HCT116 (cell line): ENCODE measurements at regions of chr20 and their contacts with region 1.

Region 1: DNA sequence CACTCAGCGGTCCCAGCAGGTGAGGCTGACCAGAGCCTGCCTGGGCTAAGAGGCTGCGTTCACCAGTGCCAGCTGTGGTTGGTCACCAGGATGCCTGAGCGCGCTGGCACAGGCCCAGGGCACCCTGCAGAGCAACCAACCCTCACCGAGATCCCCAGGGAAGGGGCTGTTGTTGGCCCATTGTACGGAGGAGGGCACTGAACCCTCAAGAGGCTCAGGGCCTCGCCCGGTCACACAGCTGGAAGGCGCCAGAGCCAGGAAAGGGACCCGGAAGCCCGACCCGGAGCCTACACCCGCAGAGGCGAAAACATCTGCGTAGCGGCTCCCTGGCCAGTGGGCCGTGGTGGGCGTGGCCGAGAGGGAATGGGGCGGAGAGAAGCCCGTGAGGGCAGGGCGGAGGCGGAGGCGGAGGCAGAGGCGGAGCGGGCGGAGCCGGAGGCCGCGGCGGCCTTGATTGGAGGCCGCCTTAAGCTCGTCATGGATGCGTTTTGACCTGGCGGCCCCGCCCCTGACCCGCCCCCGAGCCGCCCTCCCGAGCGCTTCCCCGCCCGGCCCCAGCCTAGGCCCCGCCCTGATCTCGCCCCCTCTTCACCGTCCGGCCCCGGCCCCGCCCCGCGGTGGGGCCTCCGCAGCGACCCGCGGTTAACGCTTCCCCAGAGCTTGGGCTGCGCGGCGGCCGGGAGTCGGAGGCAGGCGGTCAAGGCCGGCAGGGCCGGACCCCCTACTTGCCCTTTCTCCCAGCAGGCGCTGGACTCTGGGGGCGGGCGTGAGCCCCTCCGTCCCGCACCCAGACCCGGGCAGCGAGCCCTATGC is 2.2 kb upstream of the MRGBP start:
- DNase-seq: peak; percentile 93
- ATAC-seq: peak; percentile 79
- H3K4me3 ChIP-seq: peak overlapping the region; percentile 64 to 72
- H3K27ac ChIP-seq: peak overlapping the region; percentile 99
- H3K4me1 ChIP-seq: peaks cover 23 to 67% of the 10 kb centered on the region in 2 experiments
- H3K27me3 ChIP-seq: no peaks in the 10 kb centered on the region
- CTCF ChIP-seq: no peak
- POLR2A ChIP-seq: no peak
- RAD21 ChIP-seq: no peak

Region 2: GRCh38 chr20:62409931-62410745 is 384.0 kb before region 1 on chr20:
- CTCF ChIA-PET with region 1: interaction called, 10 read pairs
- POLR2A ChIA-PET with region 1: no interaction called
- RAD21 ChIA-PET with region 1: no interaction called
- intact Hi-C with region 1: no loop called
- DNase-seq: no peak
- ATAC-seq: peak; percentile 28
- H3K4me3 ChIP-seq: peak overlapping the region; percentile 7 to 41; a peak in 3 of 4 replicates
- H3K27ac ChIP-seq: peak overlapping the region; percentile 30; the same call in 1 of the 2 replicates
- H3K4me1 ChIP-seq: peaks cover 29 to 40% of the 10 kb centered on the region in 2 experiments
- H3K27me3 ChIP-seq: no peaks in the 10 kb centered on the region
- CTCF ChIP-seq: peak; percentile 78 to 95 (median 79)
- POLR2A ChIP-seq: no peak
- RAD21 ChIP-seq: peak; percentile 94

Region 3: DNA sequence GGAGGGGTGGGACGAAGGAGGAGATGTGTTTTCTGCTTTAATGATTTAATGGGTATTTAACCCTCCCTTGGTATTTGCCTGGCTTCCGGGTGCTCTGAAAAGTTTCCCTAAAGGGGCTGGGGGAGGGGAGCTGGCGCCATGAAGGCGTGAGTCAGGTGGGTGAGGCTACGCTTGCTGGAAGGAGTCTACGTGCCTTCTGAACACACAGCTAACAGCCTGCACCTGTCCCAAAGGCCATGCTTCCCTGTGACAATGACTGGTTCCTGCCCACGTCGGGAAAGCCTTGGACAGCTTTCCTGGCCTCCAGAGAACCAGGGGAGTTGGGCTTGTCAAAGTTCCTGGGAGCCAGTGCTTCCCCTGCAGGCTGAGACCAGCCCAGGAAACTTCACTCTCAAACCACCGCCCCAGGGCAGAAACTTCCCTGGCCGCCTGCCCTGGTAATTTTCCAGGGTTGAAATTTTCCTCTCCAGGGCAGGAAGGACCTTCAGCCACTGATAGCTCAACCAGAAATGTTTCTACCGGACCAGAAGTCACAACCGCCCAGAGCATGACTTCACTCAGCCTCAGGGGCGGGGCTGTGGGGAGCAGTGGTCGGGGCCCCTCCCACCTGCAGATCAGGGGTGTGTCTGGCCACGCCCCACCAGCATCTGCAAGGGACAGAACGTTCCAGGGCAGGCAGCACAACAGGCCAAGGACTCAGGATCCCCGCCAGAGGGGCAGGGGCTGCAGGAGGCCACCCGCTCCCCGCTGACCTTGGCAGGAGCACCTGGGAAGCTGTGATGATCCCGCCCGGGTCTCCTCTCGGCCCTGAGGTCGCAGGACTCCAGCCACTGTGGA is 170.4 kb before region 1 on chr20:
- CTCF ChIA-PET with region 1: interaction called, 9 read pairs
- POLR2A ChIA-PET with region 1: interaction called, 4 read pairs
- RAD21 ChIA-PET with region 1: no interaction called
- intact Hi-C with region 1: loop called (anchors 1 kb)
- DNase-seq: peak; percentile 73
- ATAC-seq: peak; percentile 89
- H3K4me3 ChIP-seq: peak overlapping the region; percentile 39 to 50
- H3K27ac ChIP-seq: peak overlapping the region; percentile 100
- H3K4me1 ChIP-seq: peaks cover 46 to 57% of the 10 kb centered on the region in 2 experiments
- H3K27me3 ChIP-seq: no peaks in the 10 kb centered on the region
- CTCF ChIP-seq: no peak
- POLR2A ChIP-seq: peak; percentile 30
- RAD21 ChIP-seq: no peak

Region 4: DNA sequence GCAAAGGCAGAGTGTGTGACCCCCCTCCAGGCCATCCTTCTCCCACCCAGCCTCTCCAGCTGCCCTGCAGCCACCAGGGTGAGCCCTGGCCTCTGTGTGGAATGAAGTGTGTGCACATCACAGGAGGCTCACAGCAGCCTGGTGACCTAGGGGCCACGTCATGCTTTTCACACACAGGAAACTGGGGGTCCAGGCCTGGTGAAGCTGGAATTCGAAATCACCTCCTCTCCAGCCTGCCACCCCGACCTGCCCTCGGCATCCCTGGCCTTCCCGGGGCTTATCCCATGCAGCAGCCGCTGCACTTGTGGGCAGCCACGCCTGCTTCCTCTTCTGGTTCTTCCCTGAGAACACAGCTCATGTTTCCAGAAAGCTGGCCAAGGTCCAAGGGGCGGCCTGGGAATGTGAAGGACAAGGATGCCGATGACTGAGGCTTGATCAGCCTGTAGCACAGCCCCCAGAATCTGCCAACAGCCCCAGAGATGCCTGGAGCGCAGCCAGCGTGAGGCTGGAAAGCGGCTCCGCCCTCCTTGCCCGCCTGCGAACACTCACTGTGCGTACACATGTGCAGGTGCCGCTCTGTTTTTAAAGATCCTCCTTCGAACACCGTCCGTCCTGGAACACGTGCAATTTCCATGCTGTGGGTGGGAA is 89.7 kb before region 1 on chr20:
- CTCF ChIA-PET with region 1: interaction called, 3 read pairs
- POLR2A ChIA-PET with region 1: no interaction called
- RAD21 ChIA-PET with region 1: interaction called in 1 of 2 experiments, 4 read pairs
- intact Hi-C with region 1: loop called (anchors 1 kb)
- DNase-seq: peak; percentile 91
- ATAC-seq: peak; percentile 26
- H3K4me3 ChIP-seq: peak overlapping the region; percentile 28 to 36
- H3K27ac ChIP-seq: peak overlapping the region; percentile 91
- H3K4me1 ChIP-seq: peaks cover 52 to 72% of the 10 kb centered on the region in 2 experiments
- H3K27me3 ChIP-seq: no peaks in the 10 kb centered on the region
- CTCF ChIP-seq: 0 out of 6 replicates have a peak, but pooled peaks of 1 of the 3 experiments have one; percentile 5
- POLR2A ChIP-seq: no peak
- RAD21 ChIP-seq: no peak

Region 5: DNA sequence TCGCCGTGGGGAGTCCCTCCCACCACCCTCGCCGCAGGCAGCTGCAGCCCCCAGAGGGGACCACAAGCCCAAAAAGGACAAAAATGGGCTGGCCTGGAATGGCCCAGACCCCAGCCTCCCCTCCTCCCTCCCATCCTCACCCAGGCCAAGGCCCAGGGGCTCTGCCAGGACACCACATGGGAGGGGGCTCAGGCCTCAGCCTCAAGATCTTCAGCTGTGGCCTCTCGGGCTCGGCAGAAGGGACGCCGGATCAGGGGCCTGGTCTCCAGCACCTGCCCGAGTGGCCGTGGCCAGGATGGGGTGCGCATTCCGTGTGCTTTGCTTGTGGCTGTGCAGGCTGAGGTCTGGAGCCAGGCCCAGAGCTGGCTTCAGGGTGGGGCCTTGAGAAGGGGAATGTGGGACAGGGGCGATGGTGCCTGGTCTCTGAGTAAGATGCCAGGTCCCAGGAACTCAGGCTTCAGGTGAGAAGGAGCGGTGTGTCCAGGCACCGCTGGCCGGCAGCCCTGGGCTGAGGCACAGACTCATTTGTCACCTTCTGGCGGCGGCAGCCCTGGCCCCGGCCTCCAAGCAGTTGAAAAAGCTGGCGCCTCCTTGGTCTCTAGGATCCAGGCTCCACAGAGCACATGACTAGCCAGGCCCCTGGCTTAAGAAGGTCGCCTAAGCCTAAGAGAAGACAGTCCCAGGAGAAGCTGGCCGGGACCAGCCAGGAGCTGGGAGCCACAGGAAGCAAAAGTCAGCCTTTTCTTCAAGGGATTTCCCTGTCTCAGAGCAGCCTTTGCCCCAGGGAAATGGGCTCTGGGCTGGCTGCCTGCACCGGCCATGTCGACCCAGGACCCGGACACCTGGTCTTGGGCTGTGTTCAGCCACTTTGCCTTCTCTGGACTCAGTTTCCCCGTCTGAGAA is 33.0 kb before region 1 on chr20:
- CTCF ChIA-PET with region 1: interaction called, 13 read pairs
- POLR2A ChIA-PET with region 1: interaction called, 3 read pairs
- RAD21 ChIA-PET with region 1: interaction called, 3 to 5 read pairs
- intact Hi-C with region 1: no loop called
- DNase-seq: no peak
- ATAC-seq: 0 out of 2 replicates have a peak, but pooled peaks have one; percentile 5
- H3K4me3 ChIP-seq: no peak overlapping the region
- H3K27ac ChIP-seq: peak overlapping the region; percentile 49; the same call in 1 of the 2 replicates
- H3K4me1 ChIP-seq: peaks cover 0 to 39% of the 10 kb centered on the region in 2 experiments; a peak in 3 of 4 replicates
- H3K27me3 ChIP-seq: no peaks in the 10 kb centered on the region
- CTCF ChIP-seq: no peak
- POLR2A ChIP-seq: no peak
- RAD21 ChIP-seq: no peak

Region 6: DNA sequence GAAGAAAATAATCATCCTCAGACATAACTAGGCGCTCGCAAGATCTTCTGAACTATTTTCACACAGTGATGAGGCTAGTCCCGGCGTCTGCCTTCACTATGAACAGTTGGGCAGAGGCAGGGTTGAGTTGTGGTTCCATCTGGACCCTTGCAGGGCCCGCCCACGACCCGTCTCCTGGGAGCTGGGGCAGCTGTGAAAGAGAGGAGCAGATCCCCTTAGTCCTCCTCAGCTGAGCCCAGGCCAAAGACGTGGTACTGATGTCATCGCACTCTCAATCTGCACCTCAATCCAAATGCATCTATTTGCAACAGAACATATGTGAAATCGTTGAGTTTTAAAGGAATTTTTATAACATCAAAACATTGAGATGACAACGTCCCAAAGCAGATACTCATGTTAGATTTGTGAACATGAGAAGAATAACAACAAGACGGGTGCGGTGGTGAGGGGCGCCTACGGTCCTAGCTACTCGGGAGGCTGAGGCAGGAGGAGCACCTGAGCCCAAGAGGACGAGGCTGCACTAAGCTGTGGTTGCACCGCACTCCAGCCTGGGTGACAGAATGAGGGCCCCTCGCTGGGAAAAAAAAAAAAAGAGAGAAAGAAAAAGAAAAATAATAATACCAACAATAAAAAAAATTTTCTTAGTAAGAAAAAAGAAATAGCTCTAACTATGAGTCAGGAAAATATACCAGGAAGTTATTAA is 52.2 kb after region 1 on chr20:
- CTCF ChIA-PET with region 1: no interaction called
- POLR2A ChIA-PET with region 1: no interaction called
- RAD21 ChIA-PET with region 1: no interaction called
- intact Hi-C with region 1: no loop called
- DNase-seq: no peak
- ATAC-seq: no peak
- H3K4me3 ChIP-seq: no peak overlapping the region
- H3K27ac ChIP-seq: no peak overlapping the region
- H3K4me1 ChIP-seq: no peaks in the 10 kb centered on the region
- H3K27me3 ChIP-seq: no peaks in the 10 kb centered on the region
- CTCF ChIP-seq: no peak
- POLR2A ChIP-seq: no peak
- RAD21 ChIP-seq: no peak

Region 7: DNA sequence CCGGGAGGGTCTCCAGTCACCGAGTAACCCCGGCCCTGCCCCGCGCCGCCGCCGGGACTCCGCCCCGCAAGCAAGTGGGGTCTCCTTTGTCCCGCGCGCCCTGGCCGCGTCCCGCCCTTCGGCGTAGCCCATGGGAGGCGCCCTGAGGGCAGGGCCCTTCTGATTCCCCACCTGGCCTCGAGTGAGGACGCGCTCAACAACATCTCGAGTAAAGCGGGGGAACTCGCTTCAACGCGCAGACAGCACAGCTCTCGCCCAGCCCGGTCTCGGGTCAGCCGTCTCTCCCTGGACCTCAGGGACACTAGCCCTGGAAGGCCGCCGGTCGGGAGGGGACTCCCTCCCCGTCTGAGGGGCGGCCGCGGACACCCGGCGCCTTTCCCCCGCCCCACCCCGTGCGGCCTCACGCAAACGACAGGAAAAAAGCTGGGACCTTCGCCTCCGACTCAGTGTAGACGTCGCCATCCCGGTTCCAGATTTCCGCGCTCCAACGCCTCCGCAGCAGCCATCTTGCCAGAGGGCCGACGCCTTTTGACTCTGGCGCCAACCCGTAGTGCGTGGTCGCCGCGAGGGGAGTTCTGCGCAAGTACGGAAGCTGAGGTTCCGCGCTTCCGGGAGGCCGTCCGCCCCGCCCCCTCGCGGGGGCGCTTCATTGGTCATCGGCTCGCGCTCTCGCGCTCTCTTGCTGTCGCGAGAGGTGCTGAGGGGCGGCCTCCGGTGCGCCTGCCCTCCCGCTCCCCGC is 143.4 kb after region 1 on chr20:
- CTCF ChIA-PET with region 1: no interaction called
- POLR2A ChIA-PET with region 1: no interaction called
- RAD21 ChIA-PET with region 1: no interaction called
- intact Hi-C with region 1: no loop called
- DNase-seq: peak; percentile 90
- ATAC-seq: peak; percentile 90
- H3K4me3 ChIP-seq: peak overlapping the region; percentile 76 to 95
- H3K27ac ChIP-seq: peak overlapping the region; percentile 98
- H3K4me1 ChIP-seq: peaks cover 10 to 29% of the 10 kb centered on the region in 2 experiments; a peak in 3 of 4 replicates
- H3K27me3 ChIP-seq: no peaks in the 10 kb centered on the region
- CTCF ChIP-seq: no peak
- POLR2A ChIP-seq: peak; percentile 80
- RAD21 ChIP-seq: no peak